Activated naive CD4-positive, alpha-beta T cell treated with anti-CD3 and anti-CD28 coated beads for 36 hours (primary cell): ENCODE measurements at regions of chr3 and their contacts with region 1.

Region 1: GRCh38 chr3:123201566-123202427 is at the start of gene SEC22A:
- DNase-seq: peak; percentile 98
- H3K4me3 Mint-ChIP-seq: peak within 1 kb of the TSS; percentile 95
- H3K27ac Mint-ChIP-seq: peak within 1 kb of the TSS; percentile 95
- H3K4me1 Mint-ChIP-seq: peaks cover 27% of the 10 kb centered on the region
- H3K27me3 Mint-ChIP-seq: no peaks in the 10 kb centered on the region
- total RNA-seq, gene SEC22A: 14.3 to 18.7 TPM

Region 2: DNA sequence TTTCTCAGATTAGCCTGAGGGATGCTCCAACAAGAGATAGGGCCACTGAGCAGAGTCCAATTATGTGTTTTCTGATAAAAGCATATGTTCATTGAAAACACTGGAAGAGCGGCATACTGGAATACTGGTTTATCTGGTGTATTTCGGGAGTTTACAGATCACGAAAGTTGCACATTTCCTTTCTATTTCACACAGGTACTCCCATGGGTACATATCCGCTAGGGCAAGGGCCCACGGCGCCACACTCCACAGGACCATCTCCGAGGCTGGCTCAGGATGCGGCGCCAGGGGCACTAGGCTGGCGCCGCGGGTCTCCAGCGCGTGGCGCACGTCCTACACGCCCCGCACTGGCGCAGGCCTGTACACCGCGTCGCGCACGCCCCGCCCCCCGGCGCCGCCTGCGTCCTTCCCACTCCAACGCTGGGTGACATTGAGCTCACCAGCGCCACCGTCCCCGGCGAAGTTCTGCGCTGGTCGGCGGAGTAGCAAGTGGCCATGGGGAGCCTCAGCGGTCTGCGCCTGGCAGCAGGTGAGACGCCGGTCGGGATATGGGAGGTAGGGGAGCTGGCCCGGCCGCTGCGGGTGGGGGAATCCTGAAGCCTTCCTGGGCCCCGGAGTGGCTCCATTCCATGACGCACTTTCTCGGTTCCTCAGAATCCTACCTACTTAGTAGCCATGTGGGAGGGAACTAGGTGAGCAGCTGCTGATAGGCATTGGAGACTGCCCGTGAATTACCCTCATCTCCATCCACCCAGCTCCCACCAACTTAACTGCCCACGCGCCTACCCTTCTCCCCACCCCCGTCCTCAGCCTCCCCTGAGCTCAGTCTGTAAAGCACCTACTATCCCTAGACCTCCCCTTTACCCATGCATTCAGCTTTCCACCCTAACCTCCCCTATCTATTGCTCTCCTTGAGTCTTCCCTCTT is 817.8 kb before region 1 on chr3 and contains the start of gene FAM162A:
- CTCF ChIA-PET with region 1: no interaction called
- intact Hi-C with region 1: loop called (anchors 1 kb)
- DNase-seq: peak; percentile 93
- H3K4me3 Mint-ChIP-seq: peak within 1 kb of the TSS; percentile 90
- H3K27ac Mint-ChIP-seq: peak within 1 kb of the TSS; percentile 93
- H3K4me1 Mint-ChIP-seq: peaks cover 62% of the 10 kb centered on the region
- H3K27me3 Mint-ChIP-seq: no peaks in the 10 kb centered on the region
- total RNA-seq, gene FAM162A: 111 to 112 TPM

Region 3: GRCh38 chr3:122564155-122564912 is 637.5 kb before region 1 on chr3 and contains the starts of genes DTX3L and PARP9:
- CTCF ChIA-PET with region 1: no interaction called
- intact Hi-C with region 1: loop called (anchors 10 kb)
- DNase-seq: peak; percentile 75
- H3K4me3 Mint-ChIP-seq: peak within 1 kb of the TSS; percentile 87
- H3K27ac Mint-ChIP-seq: peak within 1 kb of the TSS; percentile 93
- H3K4me1 Mint-ChIP-seq: peaks cover 70% of the 10 kb centered on the region
- H3K27me3 Mint-ChIP-seq: no peaks in the 10 kb centered on the region
- total RNA-seq, gene DTX3L: 22.3 to 24.5 TPM
- total RNA-seq, gene PARP9: 20.4 to 21.1 TPM

Region 4: DNA sequence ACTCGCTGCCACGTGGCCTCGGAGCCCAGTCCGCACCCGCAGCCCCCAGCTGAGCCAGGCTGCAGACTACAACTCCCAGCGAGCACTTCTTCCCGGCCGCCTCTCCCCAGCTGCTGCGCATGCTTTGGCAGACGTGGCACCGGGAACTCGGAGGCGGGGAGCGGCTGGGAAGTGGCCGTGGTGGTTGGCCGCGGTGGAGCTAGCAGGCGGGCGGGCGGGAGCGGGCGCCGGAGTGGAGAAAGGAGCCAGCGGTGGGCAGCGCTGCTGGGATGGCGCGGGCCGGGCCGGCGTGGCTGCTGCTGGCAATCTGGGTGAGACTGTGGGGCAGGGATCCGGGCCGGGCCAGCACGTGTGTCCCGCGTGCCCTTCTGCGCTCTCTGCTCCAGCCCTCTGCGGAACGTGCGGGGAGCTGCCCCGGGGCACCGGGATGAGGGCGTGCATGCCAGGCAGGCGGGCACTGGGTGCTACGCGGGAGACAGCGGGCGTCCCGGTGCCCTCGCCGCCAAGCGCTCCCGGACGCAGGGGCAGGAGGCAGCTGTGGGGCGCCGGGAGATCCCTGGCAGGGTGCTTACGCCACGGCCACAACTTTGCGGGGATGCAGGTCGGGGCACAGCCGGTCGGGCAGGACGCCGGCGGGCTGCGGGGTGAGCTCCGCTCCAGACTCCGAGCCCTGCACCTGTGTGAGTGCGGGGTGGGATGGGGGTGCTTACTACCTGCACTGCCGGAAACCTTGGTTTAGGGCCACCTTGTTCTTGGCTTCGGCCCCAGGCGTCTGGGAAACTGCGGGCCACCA is 134.7 kb before region 1 on chr3 and contains the start of gene PDIA5:
- CTCF ChIA-PET with region 1: interaction called, 3 read pairs
- intact Hi-C with region 1: loop called (anchors 1 kb)
- DNase-seq: peak; percentile 83
- H3K4me3 Mint-ChIP-seq: peak within 1 kb of the TSS; percentile 81
- H3K27ac Mint-ChIP-seq: peak within 1 kb of the TSS; percentile 40
- H3K4me1 Mint-ChIP-seq: peaks cover 34% of the 10 kb centered on the region
- H3K27me3 Mint-ChIP-seq: no peaks in the 10 kb centered on the region
- total RNA-seq, gene PDIA5: 20.7 to 21.2 TPM

Region 5: DNA sequence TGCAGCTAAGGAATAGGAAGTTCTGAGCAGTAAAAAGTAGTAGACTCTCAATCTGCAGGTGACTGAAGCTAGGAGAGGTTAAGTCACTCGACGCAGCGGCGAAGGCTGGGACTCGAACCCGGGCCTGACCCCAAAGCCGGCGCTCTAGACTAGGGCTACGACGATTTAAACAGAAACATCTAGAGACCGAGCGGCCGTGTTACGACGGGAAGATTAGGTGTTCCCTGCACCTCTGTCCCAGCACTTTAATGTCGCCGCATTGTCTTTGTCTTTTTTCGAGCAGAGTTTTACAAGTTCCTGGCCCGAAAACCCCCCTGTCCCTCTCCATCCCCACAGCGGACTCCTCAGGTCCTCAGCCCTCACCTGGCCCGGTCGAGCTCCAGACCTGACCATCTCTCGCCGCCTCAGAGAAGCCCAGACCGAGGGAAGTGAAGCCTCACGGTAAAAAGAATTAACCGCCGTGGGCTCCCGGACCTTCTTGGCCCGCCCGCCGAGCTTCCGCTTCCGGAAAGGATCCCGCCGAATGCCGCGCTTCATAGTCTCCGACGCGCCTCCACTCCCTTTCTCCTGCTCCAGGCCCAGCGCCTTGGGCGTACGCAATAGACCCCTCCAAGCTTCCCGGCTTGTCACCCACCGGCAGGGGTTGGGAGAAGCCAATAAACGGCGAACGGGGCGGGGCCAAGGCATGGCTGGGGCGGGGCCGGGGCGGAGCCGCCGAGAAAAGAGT is 759.1 kb after region 1 on chr3 and contains the start of gene CCDC14:
- CTCF ChIA-PET with region 1: no interaction called
- intact Hi-C with region 1: loop called (anchors 2 kb)
- DNase-seq: peak; percentile 86
- H3K4me3 Mint-ChIP-seq: peak within 1 kb of the TSS; percentile 96
- H3K27ac Mint-ChIP-seq: peak within 1 kb of the TSS; percentile 88
- H3K4me1 Mint-ChIP-seq: peaks cover 19% of the 10 kb centered on the region
- H3K27me3 Mint-ChIP-seq: peaks cover 2% of the 10 kb centered on the region
- total RNA-seq, gene CCDC14: 44.8 to 48.4 TPM